Tibial artery (tissue), 4 donors: ENCODE measurements at regions of chr3 and their contacts with region 1.

Region 1: DNA sequence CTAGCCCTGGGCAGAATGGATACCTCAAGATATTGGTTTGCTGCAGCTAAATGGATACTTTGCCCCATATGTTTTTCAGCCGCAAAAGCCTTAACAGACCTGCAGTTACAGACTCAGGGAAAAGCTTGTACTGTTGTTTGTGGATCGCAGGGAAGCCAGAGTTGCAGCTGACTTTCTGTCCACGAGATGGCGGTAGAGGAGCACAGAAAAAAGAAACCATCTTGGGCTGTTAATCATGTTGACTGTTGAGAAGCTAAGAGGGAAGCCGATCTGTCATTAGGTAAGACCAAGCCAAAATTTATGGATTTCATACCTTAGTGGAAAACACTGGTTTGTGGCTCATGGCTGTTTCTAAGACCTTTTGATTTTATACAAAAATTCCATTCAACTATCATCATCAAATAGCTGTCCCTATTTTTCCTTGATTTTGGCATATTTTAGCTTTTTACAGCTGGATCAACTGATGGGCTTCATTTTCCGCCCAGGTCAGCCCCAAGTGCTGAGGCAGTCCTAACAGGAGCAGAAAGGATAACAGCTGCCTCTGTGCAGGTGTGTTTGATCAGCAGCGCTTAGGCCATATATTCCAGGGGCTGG is 205.7 kb upstream of the ZPLD1 start:
- DNase-seq: peak; percentile 78 to 83
- H3K4me3 ChIP-seq: no peak overlapping the region
- H3K27ac ChIP-seq: no peak overlapping the region
- H3K4me1 ChIP-seq: peaks cover 0 to 12% (median 5%) of the 10 kb centered on the region in 4 donors
- H3K27me3 ChIP-seq: no peaks in the 10 kb centered on the region
- CTCF ChIP-seq: peak; percentile 87 to 96

Region 2: DNA sequence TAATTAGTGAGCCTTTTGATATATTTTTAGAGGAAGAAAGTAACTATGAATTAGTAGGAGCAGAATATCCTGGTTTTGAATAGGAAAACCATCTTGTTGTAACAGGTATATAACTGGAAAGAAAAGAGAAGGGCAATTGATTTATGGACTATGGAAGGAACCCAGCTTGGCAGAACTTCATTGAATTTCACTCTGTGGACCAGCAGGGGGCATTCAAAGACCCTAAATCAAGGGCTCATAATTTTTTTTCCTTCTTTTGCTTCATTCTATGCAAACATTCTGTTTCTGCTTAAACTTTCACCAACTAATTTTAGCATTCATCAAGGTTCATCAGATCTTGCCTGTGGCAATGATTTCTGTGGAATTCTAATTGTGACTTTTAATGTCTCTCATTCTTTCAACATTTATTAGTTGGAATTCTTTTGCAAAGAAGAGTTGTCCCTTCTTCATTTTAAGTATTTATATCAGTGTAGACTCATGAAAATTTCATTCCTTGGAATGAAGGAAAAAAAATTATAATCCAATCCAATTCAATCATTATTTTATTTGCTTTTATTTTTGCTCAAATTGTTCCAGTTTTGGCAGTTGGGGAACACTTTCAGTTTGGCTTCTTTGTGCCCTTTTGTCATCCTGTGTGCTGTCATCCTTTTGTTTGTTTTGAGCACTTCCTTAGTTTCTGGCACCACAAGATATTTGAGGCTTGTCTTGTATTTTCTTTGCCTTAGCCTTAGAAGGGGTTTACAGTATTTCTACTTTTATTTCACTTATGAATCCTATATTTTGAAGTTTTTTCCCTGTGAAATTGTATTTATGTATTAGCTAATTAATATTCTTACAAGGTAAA is 419.8 kb before region 1 on chr3:
- intact Hi-C with region 1: loop called (anchors 2 kb)
- DNase-seq: no peak
- H3K4me3 ChIP-seq: no peak overlapping the region
- H3K27ac ChIP-seq: peak overlapping the region in 1 of 2 donors; percentile 2
- H3K4me1 ChIP-seq: peaks cover 0 to 19% (median 8%) of the 10 kb centered on the region in 4 donors
- H3K27me3 ChIP-seq: no peaks in the 10 kb centered on the region
- CTCF ChIP-seq: peak; percentile 55 to 76

Region 3: GRCh38 chr3:101849721-101850245 is 379.4 kb before region 1 on chr3:
- intact Hi-C with region 1: loop called (anchors 10 kb)
- DNase-seq: peak; percentile 46 to 72
- H3K4me3 ChIP-seq: peak overlapping the region; percentile 95 to 99
- H3K27ac ChIP-seq: peak overlapping the region; percentile 100
- H3K4me1 ChIP-seq: peaks cover 0 to 43% (median 29%) of the 10 kb centered on the region in 4 donors
- H3K27me3 ChIP-seq: no peaks in the 10 kb centered on the region
- CTCF ChIP-seq: no peak

Region 4: DNA sequence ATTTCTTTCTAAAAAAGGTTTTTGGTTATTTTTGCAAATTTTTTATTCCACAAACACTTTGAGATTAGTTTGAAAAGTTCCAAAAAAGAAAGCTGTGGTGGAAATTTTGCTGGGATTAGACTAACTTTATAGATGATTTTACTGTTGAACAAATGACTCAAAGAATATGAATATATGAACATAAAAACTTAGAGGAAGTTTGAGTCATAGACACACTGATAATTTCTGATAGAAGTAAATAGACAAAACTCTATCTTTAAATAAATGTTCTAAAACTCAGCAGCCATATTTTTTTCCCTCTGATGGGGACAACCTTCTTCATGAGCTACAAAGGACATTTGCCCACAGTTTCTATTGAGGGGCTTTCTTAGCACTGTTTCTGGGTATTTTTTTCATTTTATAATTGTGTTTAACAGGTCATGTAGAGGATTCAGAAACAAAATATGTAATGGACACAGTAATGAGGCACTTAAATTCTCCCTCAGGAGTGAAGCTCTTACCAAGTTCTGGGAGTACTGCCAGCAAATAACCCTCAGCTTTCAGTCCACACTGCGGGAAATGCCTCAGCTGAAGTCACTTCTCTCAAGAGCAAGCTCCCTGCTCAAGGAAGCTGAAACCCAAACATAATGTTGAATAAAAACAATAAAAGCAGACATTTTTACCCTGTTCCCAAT is 222.2 kb before region 1 on chr3:
- intact Hi-C with region 1: loop called (anchors 10 kb)
- DNase-seq: peak; percentile 51 to 72
- H3K4me3 ChIP-seq: no peak overlapping the region
- H3K27ac ChIP-seq: peak overlapping the region; percentile 46 to 73
- H3K4me1 ChIP-seq: peaks cover 0 to 15% (median 7%) of the 10 kb centered on the region in 4 donors
- H3K27me3 ChIP-seq: no peaks in the 10 kb centered on the region
- CTCF ChIP-seq: no peak

Region 5: DNA sequence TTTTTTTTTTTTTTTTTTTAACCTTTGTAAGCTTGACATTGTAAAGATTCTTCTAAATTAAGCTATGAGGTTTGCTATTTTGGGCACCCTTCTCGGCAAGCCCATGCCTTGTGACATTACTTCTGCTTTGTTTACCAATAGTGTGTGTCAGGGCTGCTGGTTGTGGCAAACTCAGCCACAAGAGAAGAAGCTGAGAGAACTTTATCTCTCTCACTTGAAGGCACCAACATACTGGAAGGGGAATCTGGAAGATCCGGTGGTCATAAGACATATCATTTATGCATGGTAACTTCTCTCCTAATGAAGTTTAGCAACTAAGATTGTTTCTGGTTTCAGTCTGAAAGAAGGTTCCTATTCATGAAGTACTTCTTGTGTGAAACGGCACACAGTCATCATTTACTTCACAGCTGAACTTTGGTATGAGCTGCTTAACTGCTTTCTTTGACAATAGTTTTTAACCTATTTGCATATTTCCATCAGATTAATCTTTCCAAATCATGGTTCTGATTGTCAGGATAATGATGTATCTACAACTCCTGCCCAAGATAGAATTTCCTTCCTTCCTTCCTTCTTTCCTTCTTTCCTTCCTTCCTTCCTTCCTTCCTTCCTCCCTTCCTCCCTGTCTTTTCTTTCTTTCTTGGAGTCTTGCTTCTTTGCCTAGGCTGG is 190.5 kb before region 1 on chr3:
- intact Hi-C with region 1: no loop called
- DNase-seq: no peak
- H3K4me3 ChIP-seq: no peak overlapping the region
- H3K27ac ChIP-seq: peak overlapping the region; percentile 2 to 55
- H3K4me1 ChIP-seq: peaks cover 0 to 21% (median 1%) of the 10 kb centered on the region in 4 donors
- H3K27me3 ChIP-seq: no peaks in the 10 kb centered on the region
- CTCF ChIP-seq: no peak

Region 6: GRCh38 chr3:102195198-102195948 is 33.8 kb before region 1 on chr3:
- intact Hi-C with region 1: no loop called
- DNase-seq: no peak
- H3K4me3 ChIP-seq: no peak overlapping the region
- H3K27ac ChIP-seq: no peak overlapping the region
- H3K4me1 ChIP-seq: peaks cover 0 to 12% (median 6%) of the 10 kb centered on the region in 4 donors
- H3K27me3 ChIP-seq: no peaks in the 10 kb centered on the region
- CTCF ChIP-seq: no peak

Region 7: GRCh38 chr3:102206511-102207031 is 22.6 kb before region 1 on chr3:
- intact Hi-C with region 1: no loop called
- DNase-seq: peak; percentile 94 to 96
- H3K4me3 ChIP-seq: peak overlapping the region in 1 of 2 donors; percentile 15
- H3K27ac ChIP-seq: peak overlapping the region; percentile 67 to 78
- H3K4me1 ChIP-seq: peaks cover 0 to 28% (median 19%) of the 10 kb centered on the region in 4 donors
- H3K27me3 ChIP-seq: no peaks in the 10 kb centered on the region
- CTCF ChIP-seq: no peak

Region 8: DNA sequence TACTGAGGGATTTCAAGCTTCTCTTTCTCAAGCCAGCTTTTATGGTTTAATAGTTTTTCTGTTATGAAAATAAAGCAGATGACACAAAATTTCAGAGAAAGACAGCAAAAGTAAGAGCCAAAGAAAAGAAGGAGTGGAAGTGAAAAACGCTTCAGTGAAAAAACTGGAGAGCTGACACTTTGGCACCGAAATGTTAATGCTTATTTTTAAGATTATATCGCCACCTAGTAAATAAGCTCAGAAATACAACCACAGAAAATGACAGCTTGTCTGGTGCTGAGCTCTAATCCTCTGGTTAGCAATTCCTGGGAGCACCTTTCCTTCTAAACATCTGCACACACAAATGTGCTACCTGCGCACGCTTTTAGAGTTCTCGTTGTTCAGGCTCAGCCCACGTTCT is 307.3 kb after region 1 on chr3:
- intact Hi-C with region 1: loop called (anchors 5 kb)
- DNase-seq: no peak
- H3K4me3 ChIP-seq: no peak overlapping the region
- H3K27ac ChIP-seq: no peak overlapping the region
- H3K4me1 ChIP-seq: no peaks in the 10 kb centered on the region
- H3K27me3 ChIP-seq: no peaks in the 10 kb centered on the region
- CTCF ChIP-seq: peak; percentile 42 to 48